Sciatic nerve (tissue), 2 donors: ENCODE measurements at regions of chr15 and their contacts with region 1.

Region 1: DNA sequence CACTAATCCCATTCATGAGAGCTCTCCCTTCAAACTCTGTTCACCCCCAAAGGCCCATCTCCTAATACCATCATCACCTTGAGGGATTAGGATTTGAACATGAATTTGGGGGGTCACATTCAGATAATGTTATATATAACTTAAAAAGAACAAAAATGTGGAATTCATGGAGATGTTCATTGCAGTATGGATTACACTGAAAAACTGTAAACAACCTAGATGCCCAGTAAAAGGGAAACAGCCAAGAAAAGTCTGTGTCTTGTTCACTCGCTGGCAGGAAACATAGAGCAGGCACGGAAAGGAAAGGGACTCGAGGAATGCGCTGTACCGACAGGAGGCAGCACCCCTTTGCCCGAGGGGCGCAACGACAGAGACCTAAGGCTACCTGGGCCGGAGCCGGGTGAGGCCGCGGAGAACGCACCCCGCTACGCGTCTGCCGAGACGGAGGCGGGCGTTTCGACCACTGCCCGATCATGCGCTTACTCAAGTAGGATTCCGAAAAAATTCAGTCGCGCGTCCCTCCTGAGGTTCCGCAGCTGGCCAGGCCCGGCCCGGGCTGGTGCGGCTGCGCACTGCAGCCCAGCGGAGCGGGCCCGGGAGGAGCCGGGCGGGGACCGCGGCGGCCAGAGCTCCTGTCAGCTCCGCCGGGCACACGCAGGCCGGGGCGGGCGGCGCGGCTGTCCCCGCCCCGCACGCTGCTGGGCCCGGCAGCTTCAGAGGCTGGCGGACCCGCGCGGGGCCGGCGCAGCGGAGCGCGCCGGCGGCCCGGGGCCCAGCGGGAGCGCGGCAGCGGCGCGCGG is 862 bp upstream of the MAN2A2 start:
- DNase-seq: peak; percentile 85
- ATAC-seq: peak; percentile 92

Region 2: GRCh38 chr15:90934791-90935751 is 32.8 kb after region 1 on chr15 and contains the start of gene UNC45A:
- intact Hi-C with region 1: loop called (anchors 2 kb)
- DNase-seq: peak; percentile 96
- ATAC-seq: peak; percentile 92
- total RNA-seq, gene UNC45A: 56.8 TPM

Region 3: DNA sequence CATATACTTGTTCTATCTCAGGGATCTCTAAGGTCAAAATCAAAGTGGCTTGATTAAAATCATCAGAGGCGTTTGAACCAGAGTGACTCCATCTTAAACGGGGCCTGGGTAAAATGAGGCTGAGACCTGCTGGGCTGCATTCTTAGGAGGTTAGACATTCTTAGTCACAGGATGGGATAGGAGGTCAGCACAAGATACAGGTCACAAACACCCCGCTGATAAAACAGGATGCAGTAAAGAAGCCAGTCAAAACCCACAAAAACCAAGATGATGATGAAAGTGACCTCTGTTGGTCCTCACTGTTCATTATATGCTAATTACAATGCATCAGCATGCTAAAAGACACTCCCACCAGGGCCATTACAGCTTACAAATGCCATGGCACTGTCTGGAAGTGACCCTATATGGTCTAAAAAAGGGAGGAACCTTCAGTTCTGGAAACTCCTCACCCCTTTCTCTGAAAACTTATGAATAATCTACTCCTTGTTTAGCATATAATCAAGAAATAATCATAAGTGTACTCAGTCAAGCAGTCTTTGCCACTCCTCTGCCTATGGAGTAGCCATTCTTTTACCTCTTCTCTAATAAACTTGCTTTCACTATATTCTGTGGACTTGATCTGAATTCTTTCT is 807.9 kb after region 1 on chr15:
- intact Hi-C with region 1: no loop called
- DNase-seq: no peak
- ATAC-seq: no peak